Psoas muscle (tissue), 8 donors: ENCODE measurements at regions of chr2 and their contacts with region 1.

Region 1: GRCh38 chr2:212686285-212686895 is 147.8 kb upstream of the ERBB4 start:
- DNase-seq: peak; percentile 30 to 51
- ATAC-seq: peak in 1 of 4 donors; percentile 70
- H3K4me3 ChIP-seq: peak overlapping the region; percentile 35
- H3K27ac ChIP-seq: no peak overlapping the region
- H3K4me1 ChIP-seq: no peaks in the 10 kb centered on the region
- H3K27me3 ChIP-seq: no peaks in the 10 kb centered on the region
- CTCF ChIP-seq: peak; percentile 91

Region 2: GRCh38 chr2:212958757-212959295 is 272.4 kb after region 1 on chr2:
- intact Hi-C with region 1: no loop called
- DNase-seq: no peak
- ATAC-seq: peak in 1 of 4 donors; percentile 36
- H3K4me3 ChIP-seq: no peak overlapping the region
- H3K27ac ChIP-seq: peak overlapping the region; percentile 63
- H3K4me1 ChIP-seq: peaks cover 30% of the 10 kb centered on the region
- H3K27me3 ChIP-seq: no peaks in the 10 kb centered on the region
- CTCF ChIP-seq: no peak

Region 3: GRCh38 chr2:213119061-213119856 is 432.9 kb after region 1 on chr2:
- intact Hi-C with region 1: no loop called
- DNase-seq: no peak
- ATAC-seq: peak; percentile 71 to 94 (median 82)
- H3K4me3 ChIP-seq: no peak overlapping the region
- H3K27ac ChIP-seq: peak overlapping the region; percentile 51
- H3K4me1 ChIP-seq: peaks cover 60% of the 10 kb centered on the region
- H3K27me3 ChIP-seq: no peaks in the 10 kb centered on the region
- CTCF ChIP-seq: no peak

Region 4: DNA sequence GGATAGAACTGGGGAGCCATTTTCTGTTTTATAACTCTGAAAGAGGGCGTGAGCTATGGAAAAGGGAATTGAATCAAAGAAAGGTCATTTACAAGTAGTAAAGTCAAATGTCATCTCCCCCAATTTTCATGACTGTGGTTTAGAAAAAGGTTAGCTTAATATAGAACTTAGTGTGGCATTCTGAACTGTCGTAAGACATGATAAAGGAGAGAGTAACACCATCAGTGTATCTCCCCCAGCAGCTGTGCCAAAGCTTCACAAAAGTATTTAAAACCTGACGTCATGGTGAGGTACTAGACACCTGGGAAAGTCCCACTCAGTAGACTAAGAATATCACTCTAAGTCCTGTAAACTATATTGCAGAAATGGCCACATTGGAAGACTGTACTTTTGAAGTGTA is 470.9 kb after region 1 on chr2:
- intact Hi-C with region 1: loop called (anchors 2 to 5 kb)
- DNase-seq: no peak
- ATAC-seq: no peak
- H3K4me3 ChIP-seq: no peak overlapping the region
- H3K27ac ChIP-seq: no peak overlapping the region
- H3K4me1 ChIP-seq: peaks cover 13% of the 10 kb centered on the region
- H3K27me3 ChIP-seq: no peaks in the 10 kb centered on the region
- CTCF ChIP-seq: no peak